CD8-positive, alpha-beta memory T cell (primary cell): ENCODE measurements at regions of chr3 and their contacts with region 1.

Region 1: DNA sequence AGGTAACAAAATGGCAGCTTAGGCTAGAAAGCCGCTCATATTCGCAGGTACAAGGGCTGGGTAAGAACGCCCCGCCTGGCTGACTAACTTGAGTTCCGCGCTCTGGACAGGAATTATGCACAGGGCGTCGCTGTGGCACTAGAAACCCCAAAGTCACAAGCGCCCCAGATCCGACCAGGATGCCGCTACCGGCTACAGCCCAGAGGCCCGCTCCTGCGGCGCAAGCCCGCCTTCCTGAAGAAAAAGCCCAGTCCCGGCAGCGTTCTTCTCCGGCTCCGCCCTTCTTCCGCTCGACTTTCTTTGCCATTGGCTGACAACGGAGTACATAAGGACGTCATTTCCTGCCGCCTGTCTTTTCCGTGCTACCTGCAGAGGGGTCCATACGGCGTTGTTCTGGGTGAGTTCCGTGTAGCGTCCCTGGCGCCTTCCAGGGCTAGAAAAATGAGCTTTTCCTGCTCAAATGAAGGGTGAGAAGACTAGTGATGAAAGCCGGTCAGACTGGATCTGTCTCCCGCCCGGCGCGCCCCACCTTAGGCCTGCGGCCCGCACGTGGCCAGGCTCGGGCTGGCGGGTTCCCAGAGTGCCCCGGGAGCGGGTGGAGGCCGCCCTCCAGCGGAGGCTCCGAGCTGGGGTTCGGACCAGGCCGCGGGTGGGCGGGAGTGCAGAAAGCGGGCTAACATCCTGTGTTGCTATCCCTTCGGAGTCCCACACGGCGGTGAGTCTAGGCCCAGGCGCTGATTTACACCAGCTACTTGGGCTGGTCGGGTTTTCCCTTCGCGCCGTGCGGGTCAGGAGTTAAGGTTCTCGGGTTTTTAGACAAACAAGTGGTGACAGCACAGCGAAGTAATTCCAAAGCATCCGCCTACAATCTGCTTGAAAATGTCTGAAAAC is at the start of gene RPSA:
- DNase-seq: peak; percentile 91 to 98 (median 97)
- H3K4me3 ChIP-seq: peak within 1 kb of the TSS; percentile 82
- H3K4me3 Mint-ChIP-seq: peak within 1 kb of the TSS; percentile 91 to 97 (median 96)
- H3K27ac ChIP-seq: peak within 1 kb of the TSS; percentile 89
- H3K27ac Mint-ChIP-seq: peak within 1 kb of the TSS; percentile 83 to 98 (median 97)
- H3K4me1 ChIP-seq: peaks cover 40% of the 10 kb centered on the region
- H3K4me1 Mint-ChIP-seq: peaks cover 43 to 59% (median 51%) of the 10 kb centered on the region in 3 donors
- H3K27me3 ChIP-seq: no peaks in the 10 kb centered on the region
- H3K27me3 Mint-ChIP-seq: peaks cover 0 to 1% of the 10 kb centered on the region in 2 donors
- total RNA-seq, gene RPSA: 2,459 to 2,518 TPM

Region 2: DNA sequence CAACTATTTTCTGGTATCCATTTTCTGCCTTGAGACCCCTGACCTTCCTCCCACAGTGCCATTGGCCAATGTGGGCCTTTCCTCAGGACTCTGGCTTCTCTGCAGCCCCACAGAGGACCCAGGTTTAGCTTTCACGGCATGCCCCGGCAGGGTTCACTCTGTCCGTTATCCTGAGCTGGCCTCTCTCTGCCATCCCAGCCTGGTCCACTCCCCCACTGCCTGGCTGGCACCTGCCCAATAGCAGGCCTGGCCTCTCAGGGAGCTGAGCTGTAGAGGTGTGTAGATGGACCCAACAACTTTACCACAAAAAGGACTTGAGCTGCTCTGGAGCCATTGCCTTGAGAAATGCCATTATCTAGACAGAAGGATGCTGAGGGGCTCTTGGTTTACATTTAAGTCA is 648.1 kb before region 1 on chr3:
- CTCF ChIA-PET with region 1: no interaction called
- POLR2A ChIA-PET with region 1: no interaction called
- DNase-seq: no peak
- H3K4me3 ChIP-seq: no peak overlapping the region
- H3K4me3 Mint-ChIP-seq: no peak overlapping the region
- H3K27ac ChIP-seq: no peak overlapping the region
- H3K27ac Mint-ChIP-seq: no peak overlapping the region
- H3K4me1 ChIP-seq: no peaks in the 10 kb centered on the region
- H3K4me1 Mint-ChIP-seq: no peaks in the 10 kb centered on the region
- H3K27me3 ChIP-seq: no peaks in the 10 kb centered on the region
- H3K27me3 Mint-ChIP-seq: peaks cover 12 to 20% of the 10 kb centered on the region in 2 donors

Region 3: DNA sequence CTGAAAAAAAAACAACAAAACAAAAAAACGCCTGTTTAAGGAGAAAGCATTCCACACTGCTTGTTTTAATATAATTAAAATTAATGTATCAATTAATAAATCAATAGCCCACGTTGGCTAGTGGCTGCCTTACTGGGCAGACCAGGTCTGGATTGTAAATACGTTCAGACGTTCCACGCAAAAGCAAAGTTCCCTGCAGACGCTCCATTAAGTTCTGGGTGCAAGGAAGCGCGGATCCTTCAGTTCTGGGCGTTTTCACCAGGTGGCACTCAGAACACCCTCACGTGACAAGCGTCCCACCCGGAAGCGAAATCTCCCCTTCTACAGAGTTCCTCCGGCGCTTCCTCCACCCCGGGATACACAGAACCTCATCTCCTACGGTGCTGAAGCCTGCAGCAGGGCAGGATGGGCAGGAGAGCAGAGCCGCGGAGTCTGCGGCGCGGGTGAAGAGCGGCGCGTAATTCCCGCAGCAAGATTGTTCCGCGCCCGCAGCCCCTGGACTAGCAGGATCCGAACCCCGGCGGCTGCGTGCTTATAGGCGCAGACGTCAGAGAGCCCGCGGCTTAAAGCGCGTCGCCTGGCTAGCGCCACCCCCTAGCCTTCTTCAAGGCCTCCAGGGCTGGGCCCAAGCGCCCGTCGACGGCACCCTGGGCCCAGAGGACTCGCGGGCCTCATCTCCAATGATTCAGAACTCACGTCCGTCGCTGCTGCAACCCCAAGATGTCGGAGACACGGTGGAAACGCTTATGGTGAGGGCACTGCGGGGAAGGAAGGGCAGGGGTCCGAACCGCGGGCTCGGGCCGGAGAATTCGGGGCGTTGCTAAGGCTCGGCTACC is 23.4 kb before region 1 on chr3 and contains the start of gene SLC25A38:
- CTCF ChIA-PET with region 1: interaction called, 21 read pairs
- POLR2A ChIA-PET with region 1: interaction called, 13 read pairs
- DNase-seq: peak; percentile 71 to 89 (median 83)
- H3K4me3 ChIP-seq: peak within 1 kb of the TSS; percentile 95
- H3K4me3 Mint-ChIP-seq: peak within 1 kb of the TSS; percentile 96 to 100 (median 98)
- H3K27ac ChIP-seq: peak within 1 kb of the TSS; percentile 97
- H3K27ac Mint-ChIP-seq: peak within 1 kb of the TSS; percentile 96 to 100 (median 100)
- H3K4me1 ChIP-seq: peaks cover 42% of the 10 kb centered on the region
- H3K4me1 Mint-ChIP-seq: peaks cover 47 to 64% (median 61%) of the 10 kb centered on the region in 3 donors
- H3K27me3 ChIP-seq: no peaks in the 10 kb centered on the region
- H3K27me3 Mint-ChIP-seq: peaks cover 0 to 1% of the 10 kb centered on the region in 2 donors
- total RNA-seq, gene SLC25A38: 71.3 to 73.0 TPM

Region 4: DNA sequence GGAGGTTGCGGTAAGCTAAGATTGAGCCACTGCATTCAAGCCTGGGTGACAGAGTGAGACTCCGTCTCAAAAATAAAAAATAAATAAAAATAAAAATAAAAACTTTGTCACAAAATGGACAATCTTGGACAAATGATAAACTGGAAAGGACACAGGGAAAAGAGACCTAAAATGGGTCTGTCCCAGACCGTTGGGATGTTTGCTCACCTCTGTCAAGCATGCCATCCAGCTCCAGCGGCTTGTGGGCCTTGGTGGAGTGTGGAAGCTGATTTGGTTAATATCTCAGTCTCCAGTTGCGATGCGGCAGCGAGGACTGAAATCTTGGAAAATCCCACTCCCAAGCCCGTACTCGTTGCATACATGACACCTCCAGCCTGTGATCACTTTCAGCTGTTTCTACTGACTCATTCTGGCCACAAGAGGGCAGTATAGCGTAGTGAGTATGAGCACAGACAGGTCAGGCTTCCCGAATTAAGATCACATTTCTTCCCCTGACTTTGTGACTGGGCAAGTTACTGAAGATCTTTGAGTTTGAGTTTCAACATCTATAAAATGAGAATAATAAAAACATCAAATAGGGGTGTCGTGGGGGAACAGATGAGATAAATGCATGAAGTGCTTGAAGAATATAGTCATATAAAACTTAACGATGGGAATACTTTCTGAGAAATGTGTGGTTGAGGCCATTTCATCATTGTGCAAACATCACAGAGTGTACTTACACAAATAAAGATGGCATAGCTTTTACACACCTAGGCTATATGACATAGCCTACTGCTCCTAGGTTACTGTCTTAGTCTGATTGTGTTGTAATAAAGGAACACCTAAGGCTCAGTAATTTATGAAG is 41.2 kb after region 1 on chr3:
- CTCF ChIA-PET with region 1: interaction called, 24 read pairs
- POLR2A ChIA-PET with region 1: interaction called, 3 read pairs
- DNase-seq: peak; percentile 38 to 63 (median 43)
- H3K4me3 ChIP-seq: no peak overlapping the region
- H3K4me3 Mint-ChIP-seq: no peak overlapping the region
- H3K27ac ChIP-seq: no peak overlapping the region
- H3K27ac Mint-ChIP-seq: no peak overlapping the region
- H3K4me1 ChIP-seq: no peaks in the 10 kb centered on the region
- H3K4me1 Mint-ChIP-seq: no peaks in the 10 kb centered on the region
- H3K27me3 ChIP-seq: no peaks in the 10 kb centered on the region
- H3K27me3 Mint-ChIP-seq: peaks cover 0 to 14% of the 10 kb centered on the region in 2 donors

Region 5: GRCh38 chr3:39505866-39506742 is 99.5 kb after region 1 on chr3:
- CTCF ChIA-PET with region 1: no interaction called
- POLR2A ChIA-PET with region 1: no interaction called
- DNase-seq: no peak
- H3K4me3 ChIP-seq: no peak overlapping the region
- H3K4me3 Mint-ChIP-seq: no peak overlapping the region
- H3K27ac ChIP-seq: no peak overlapping the region
- H3K27ac Mint-ChIP-seq: no peak overlapping the region
- H3K4me1 ChIP-seq: no peaks in the 10 kb centered on the region
- H3K4me1 Mint-ChIP-seq: peaks cover 0 to 3% (median 0%) of the 10 kb centered on the region in 3 donors
- H3K27me3 ChIP-seq: peaks cover 3% of the 10 kb centered on the region
- H3K27me3 Mint-ChIP-seq: peaks cover 13 to 22% of the 10 kb centered on the region in 2 donors

Region 6: GRCh38 chr3:40437889-40438288 is 1031.3 kb after region 1 on chr3:
- CTCF ChIA-PET with region 1: no interaction called
- POLR2A ChIA-PET with region 1: no interaction called
- DNase-seq: no peak
- H3K4me3 ChIP-seq: no peak overlapping the region
- H3K4me3 Mint-ChIP-seq: no peak overlapping the region
- H3K27ac ChIP-seq: no peak overlapping the region
- H3K27ac Mint-ChIP-seq: no peak overlapping the region
- H3K4me1 ChIP-seq: no peaks in the 10 kb centered on the region
- H3K4me1 Mint-ChIP-seq: no peaks in the 10 kb centered on the region
- H3K27me3 ChIP-seq: no peaks in the 10 kb centered on the region
- H3K27me3 Mint-ChIP-seq: no peaks in the 10 kb centered on the region